Mammary epithelial cell (primary cell): ENCODE measurements at regions of chr4 and their contacts with region 1.

Region 1: GRCh38 chr4:121307445-121308327 is 73.1 kb downstream of the QRFPR start:
- DNase-seq: peak; percentile 63
- H3K4me3 ChIP-seq: no peak overlapping the region
- H3K27ac ChIP-seq: no peak overlapping the region
- H3K4me1 ChIP-seq: peaks cover 11% of the 10 kb centered on the region
- H3K27me3 ChIP-seq: no peaks in the 10 kb centered on the region
- CTCF ChIP-seq: peak; percentile 87 to 92

Region 2: DNA sequence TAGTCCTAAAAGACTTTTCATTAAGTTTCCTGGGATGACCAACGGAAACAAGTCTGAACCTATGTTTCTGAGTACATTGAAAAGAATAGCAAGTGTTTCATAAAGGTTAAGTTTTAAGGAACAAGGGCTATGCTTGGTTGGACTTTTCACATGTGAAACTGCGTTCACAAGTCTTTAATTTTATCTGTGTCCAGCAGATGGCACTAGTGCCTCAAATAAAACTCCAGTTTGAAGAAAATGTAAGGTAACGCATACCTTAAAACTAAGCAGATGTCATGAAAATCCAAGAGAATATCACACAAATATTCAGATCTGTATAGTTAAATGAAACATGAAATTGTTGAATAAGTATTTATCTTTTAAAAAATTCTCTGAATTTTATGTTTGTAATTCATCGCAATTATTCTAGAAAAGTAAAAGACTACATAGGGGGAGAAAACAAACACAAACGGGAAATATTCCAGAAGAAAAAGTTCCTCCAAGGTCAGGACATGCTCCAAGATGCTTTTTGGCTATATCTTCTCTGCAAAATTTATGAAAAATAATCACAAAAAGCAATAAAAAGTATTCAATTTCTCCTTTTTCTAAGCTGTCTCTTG is 1151.5 kb before region 1 on chr4:
- CTCF ChIA-PET with region 1: interaction called, 3 read pairs
- dilution Hi-C with region 1: no loop called
- in situ Hi-C with region 1: no loop called
- intact Hi-C with region 1: loop called (anchors 5 kb)
- DNase-seq: peak; percentile 35
- H3K4me3 ChIP-seq: no peak overlapping the region
- H3K27ac ChIP-seq: no peak overlapping the region
- H3K4me1 ChIP-seq: no peaks in the 10 kb centered on the region
- H3K27me3 ChIP-seq: no peaks in the 10 kb centered on the region
- CTCF ChIP-seq: peak; percentile 49 to 54

Region 3: DNA sequence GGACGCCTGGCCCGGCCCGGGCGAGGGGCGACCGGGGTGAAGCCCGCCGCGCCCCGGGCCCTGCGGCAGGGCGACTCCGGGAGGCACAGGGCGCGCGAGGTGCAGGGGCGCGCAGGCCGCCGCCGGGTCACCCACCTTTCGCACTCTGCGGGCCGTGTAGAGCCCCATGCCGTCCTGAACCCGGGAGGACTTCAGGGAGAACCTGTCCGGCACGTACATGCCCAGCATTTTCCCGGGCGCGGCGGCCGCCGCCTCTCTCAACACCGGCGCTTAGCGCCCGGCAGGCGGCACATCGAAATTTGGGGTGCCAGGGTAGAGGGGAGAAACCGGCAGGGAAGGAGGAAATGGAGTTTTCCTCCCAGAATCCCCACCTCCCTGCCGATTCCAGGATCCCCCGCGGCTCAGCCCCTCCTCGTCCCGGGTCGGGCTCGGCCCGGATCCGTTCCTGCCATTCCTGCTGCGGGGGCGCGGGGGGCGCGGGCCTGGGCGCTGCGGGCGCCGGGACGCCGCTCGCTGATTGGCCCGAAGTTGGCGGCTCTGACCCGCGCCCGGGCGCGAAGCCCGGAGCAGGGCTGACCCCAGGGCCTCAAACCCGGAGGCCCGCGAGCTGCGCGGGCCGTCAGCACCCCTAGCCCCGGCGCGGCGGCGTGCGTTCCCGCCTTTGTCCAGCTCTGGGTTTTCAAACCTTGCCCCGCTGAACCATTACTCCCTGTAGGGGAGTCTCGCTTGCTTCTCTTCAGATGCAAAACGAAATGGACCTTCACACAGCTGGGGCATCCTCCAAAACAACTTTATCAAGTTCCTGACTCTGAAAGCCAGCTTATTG is 385.1 kb before region 1 on chr4 and contains the start of gene PRDM5:
- CTCF ChIA-PET with region 1: no interaction called
- dilution Hi-C with region 1: no loop called
- in situ Hi-C with region 1: no loop called
- intact Hi-C with region 1: loop called (anchors 10 kb)
- DNase-seq: peak; percentile 35
- H3K4me3 ChIP-seq: peak within 1 kb of the TSS; percentile 78 to 92 (median 82)
- H3K27ac ChIP-seq: peak within 1 kb of the TSS; percentile 77
- H3K4me1 ChIP-seq: peaks cover 13% of the 10 kb centered on the region
- H3K27me3 ChIP-seq: no peaks in the 10 kb centered on the region
- CTCF ChIP-seq: peak in 1 of 2 donors; percentile 45
- total RNA-seq, gene PRDM5: 7.9 to 19.0 TPM

Region 4: GRCh38 chr4:121192480-121192879 is 115.2 kb before region 1 on chr4:
- CTCF ChIA-PET with region 1: interaction called, 6 read pairs
- dilution Hi-C with region 1: no loop called
- in situ Hi-C with region 1: loop called in 1 of 2 experiments (anchors 10 kb)
- intact Hi-C with region 1: loop called (anchors 1 kb)
- DNase-seq: peak; percentile 35
- H3K4me3 ChIP-seq: peak overlapping the region in 2 of 3 experiments; percentile 2 to 31
- H3K27ac ChIP-seq: no peak overlapping the region
- H3K4me1 ChIP-seq: peaks cover 5% of the 10 kb centered on the region
- H3K27me3 ChIP-seq: peaks cover 3% of the 10 kb centered on the region
- CTCF ChIP-seq: peak; percentile 74 to 79

Region 5: DNA sequence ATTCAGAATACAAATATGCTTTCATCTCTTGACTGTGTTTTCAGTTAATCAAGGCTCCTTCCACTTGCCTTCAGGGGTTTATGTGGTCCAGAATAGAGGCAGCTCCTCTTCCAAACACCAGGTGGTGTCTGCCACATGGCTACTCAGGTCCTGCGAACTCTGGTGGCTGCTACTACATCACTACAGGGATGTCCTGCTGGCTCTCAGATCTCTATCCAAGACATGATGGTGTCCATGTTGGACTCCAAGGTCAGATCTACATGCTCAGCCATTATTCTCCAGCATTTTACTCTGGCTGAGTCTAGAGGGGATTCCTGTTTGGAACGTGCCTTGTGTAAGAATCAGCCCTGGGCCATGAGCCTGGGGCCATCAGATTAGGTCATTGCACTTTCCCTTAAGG is 30.1 kb before region 1 on chr4:
- CTCF ChIA-PET with region 1: interaction called, 3 read pairs
- dilution Hi-C with region 1: no loop called
- in situ Hi-C with region 1: no loop called
- intact Hi-C with region 1: loop called (anchors 2 kb)
- DNase-seq: peak; percentile 11
- H3K4me3 ChIP-seq: no peak overlapping the region
- H3K27ac ChIP-seq: no peak overlapping the region
- H3K4me1 ChIP-seq: no peaks in the 10 kb centered on the region
- H3K27me3 ChIP-seq: no peaks in the 10 kb centered on the region
- CTCF ChIP-seq: peak; percentile 16 to 45